PC-9 (cell line): ENCODE measurements at regions of chr1 and their contacts with region 1.

Region 1: GRCh38 chr1:66331657-66332547 is 202.1 kb upstream of the SGIP1 start:
- DNase-seq: peak in 1 of 2 experiments; percentile 60
- H3K4me3 ChIP-seq: no peak overlapping the region
- H3K27ac ChIP-seq: no peak overlapping the region
- H3K4me1 ChIP-seq: no peaks in the 10 kb centered on the region
- H3K27me3 ChIP-seq: no peaks in the 10 kb centered on the region
- CTCF ChIP-seq: no peak

Region 2: DNA sequence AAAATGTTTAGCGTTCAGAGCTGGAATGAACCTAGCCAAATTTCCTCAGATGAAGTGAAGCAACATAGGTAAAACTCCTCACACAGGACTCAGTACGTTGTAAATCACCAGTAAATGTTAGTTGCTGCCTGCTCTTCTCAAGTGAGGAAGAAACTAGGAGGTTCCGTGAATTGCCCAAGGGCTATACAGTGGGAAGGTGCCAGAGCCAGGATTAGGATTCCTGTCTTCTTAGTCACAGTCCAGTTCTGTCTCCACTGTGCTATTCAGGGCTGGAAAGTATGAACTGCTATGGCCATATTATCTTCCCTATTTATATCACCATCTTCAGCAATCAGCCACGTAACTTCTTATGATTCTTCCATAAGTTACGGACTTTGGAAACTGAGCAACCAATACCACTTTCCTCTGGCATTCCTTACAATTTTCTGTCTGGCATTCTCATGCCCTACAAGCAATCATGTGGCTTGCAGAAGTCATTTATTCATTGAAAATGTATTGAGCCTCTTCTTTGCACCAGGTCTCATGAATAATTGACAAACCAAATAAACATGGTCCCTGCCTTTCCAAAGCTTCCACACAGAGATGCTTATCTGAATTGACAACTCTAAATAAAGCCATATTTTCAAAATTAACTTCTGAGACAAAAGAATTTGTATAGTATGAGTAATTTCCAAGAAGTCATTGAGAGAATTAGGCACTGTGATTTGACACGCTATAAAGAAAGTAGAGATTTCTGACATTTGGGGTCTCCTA is 69.5 kb before region 1 on chr1:
- CTCF ChIA-PET with region 1: no interaction called
- POLR2A ChIA-PET with region 1: interaction called, 11 read pairs
- intact Hi-C with region 1: no loop called
- DNase-seq: peak; percentile 52 to 85
- H3K4me3 ChIP-seq: no peak overlapping the region
- H3K27ac ChIP-seq: no peak overlapping the region
- H3K4me1 ChIP-seq: 0 out of 2 replicates have a peak, but pooled peaks cover 6% of the 10 kb centered on the region
- H3K27me3 ChIP-seq: no peaks in the 10 kb centered on the region
- CTCF ChIP-seq: no peak

Region 3: GRCh38 chr1:66271216-66271903 is 60.5 kb before region 1 on chr1:
- CTCF ChIA-PET with region 1: interaction called, 12 read pairs
- POLR2A ChIA-PET with region 1: interaction called, 11 read pairs
- intact Hi-C with region 1: loop called (anchors 1 kb)
- DNase-seq: peak in 1 of 2 experiments; percentile 74
- H3K4me3 ChIP-seq: no peak overlapping the region
- H3K27ac ChIP-seq: no peak overlapping the region
- H3K4me1 ChIP-seq: no peaks in the 10 kb centered on the region
- H3K27me3 ChIP-seq: no peaks in the 10 kb centered on the region
- CTCF ChIP-seq: no peak

Region 4: DNA sequence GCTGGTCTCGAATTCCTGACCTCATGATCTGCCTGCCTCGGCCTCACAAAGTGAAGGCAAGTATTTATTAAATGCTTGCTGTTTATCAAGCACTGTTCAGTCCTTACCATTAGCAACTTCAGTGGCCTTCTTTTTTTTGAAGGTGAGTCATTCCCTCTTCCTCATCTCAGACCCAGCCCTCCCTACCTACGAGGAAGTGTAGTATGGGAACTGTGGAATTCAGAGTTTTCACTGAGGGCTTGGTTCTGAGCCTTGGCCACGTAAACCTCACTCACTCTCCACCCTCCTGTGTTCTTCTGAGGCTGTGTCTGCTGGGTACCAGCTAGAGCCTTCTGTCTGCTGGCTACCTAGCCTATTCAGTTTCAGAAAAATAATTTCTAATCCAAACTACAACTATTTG is 16.2 kb before region 1 on chr1:
- CTCF ChIA-PET with region 1: interaction called, 3 read pairs
- POLR2A ChIA-PET with region 1: no interaction called
- intact Hi-C with region 1: loop called (anchors 2 kb)
- DNase-seq: peak; percentile 55 to 71
- H3K4me3 ChIP-seq: no peak overlapping the region
- H3K27ac ChIP-seq: peak overlapping the region; percentile 8; the same call in 1 of the 2 replicates
- H3K4me1 ChIP-seq: no peaks in the 10 kb centered on the region
- H3K27me3 ChIP-seq: no peaks in the 10 kb centered on the region
- CTCF ChIP-seq: no peak

Region 5: DNA sequence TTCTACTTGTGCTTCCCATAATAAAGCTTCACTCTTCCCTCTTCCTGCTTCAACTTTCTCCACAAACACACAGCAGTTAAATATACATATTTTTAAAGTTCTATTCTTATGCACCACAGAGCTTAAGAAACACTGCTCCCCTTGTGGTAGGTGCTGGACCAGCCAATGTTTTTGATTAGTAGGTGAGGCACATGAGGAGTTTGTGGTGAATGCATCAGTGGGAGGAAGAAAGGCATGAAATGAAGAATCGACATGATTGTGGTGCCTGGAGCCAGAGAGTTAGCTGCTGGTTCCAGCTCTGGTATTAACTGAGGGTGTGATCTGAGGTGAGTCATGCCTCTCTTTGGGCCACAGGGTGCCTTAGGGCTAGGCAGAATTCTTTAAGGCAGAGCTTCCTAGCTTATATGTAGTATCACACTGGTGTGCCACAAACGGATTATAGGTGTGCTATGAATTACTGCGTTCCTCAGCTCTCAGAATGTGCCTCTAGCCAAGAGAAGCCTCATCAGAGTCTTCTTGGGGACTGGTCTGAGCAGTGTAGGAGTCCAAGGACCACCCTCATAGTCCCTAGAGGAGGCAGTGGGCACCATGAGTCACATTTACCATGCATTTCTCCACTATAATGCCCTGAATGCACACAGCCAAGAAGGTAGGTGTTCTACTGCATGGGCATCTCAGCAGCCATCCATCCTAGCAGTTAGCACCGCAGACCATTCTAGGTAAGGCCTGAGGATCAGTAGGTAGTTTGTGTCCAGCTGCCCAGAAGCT is 104.7 kb after region 1 on chr1:
- CTCF ChIA-PET with region 1: interaction called, 4 read pairs
- POLR2A ChIA-PET with region 1: no interaction called
- intact Hi-C with region 1: loop called (anchors 5 kb)
- DNase-seq: peak in 1 of 2 experiments; percentile 56
- H3K4me3 ChIP-seq: no peak overlapping the region
- H3K27ac ChIP-seq: no peak overlapping the region
- H3K4me1 ChIP-seq: peaks cover 8% of the 10 kb centered on the region; the same call in 1 of the 2 replicates
- H3K27me3 ChIP-seq: no peaks in the 10 kb centered on the region
- CTCF ChIP-seq: peak; percentile 37; the same call in 1 of the 2 replicates